ENCODE measurements at regions of chr20 and their contacts with region 1.

Region 1: DNA sequence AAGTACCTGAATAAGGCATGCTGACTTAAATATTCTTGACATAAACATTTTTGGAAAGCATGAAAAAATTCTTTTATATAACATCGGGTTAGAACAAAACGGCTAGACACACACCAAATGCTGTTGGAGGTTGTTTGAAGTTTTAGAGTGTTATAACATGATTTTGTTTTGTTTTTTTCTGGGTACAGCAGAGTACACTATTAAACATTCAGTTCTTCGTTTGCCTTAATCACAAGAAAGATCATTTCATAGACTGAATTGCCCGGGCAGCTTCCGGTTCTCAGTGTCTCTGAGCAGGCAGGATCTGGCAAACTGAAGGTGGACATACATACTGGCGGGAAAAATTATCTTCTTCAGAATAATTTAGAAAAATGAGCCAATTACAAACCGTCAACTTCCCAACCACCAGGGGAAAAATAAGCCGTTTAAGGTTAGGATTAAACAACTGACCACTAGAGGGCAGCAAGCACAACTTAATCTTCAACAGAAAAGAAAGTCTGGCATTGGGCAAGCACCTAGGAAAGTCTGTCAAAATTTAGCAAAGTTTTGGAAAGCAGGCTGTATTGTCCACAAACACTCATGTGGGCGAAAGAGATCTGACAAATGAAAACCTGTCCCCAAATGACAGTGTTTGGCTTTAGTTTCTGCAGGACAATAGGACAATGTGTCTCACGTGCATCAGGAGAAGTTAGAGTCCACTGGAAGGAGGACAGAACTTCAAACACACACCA is 15.0 kb downstream of the ZNF217 start:
- DNase-seq: peak in 1 of 3 donors; percentile 37
- ATAC-seq: peak; percentile 70 to 72
- H3K4me3 ChIP-seq: peak overlapping the region; percentile 8
- H3K27ac ChIP-seq: peak overlapping the region; percentile 82
- H3K4me1 ChIP-seq: peaks cover 7% of the 10 kb centered on the region
- H3K27me3 ChIP-seq: no peaks in the 10 kb centered on the region

Region 2: DNA sequence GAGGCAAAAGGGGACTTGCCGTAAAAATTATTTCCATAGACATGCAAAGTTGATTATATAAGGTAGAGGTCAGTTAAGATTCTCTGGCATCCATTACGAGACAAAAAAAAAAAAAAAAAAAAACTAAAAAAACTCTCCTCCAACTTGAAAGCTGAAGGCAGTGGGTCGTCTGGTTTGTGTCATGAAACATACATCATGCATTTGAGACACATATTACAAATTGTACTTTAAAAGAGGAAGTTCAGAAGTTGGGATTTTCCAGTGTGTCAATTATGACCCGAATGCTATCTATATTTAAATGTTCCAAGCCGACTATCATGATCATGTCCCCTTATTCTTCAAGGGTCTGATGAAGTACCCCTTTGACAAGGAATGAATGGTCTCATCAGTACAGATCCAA is 110.1 kb before region 1 on chr20:
- intact Hi-C with region 1: no loop called
- DNase-seq: no peak
- ATAC-seq: no peak
- H3K4me3 ChIP-seq: no peak overlapping the region
- H3K27ac ChIP-seq: no peak overlapping the region
- H3K4me1 ChIP-seq: no peaks in the 10 kb centered on the region
- H3K27me3 ChIP-seq: no peaks in the 10 kb centered on the region

Region 3: DNA sequence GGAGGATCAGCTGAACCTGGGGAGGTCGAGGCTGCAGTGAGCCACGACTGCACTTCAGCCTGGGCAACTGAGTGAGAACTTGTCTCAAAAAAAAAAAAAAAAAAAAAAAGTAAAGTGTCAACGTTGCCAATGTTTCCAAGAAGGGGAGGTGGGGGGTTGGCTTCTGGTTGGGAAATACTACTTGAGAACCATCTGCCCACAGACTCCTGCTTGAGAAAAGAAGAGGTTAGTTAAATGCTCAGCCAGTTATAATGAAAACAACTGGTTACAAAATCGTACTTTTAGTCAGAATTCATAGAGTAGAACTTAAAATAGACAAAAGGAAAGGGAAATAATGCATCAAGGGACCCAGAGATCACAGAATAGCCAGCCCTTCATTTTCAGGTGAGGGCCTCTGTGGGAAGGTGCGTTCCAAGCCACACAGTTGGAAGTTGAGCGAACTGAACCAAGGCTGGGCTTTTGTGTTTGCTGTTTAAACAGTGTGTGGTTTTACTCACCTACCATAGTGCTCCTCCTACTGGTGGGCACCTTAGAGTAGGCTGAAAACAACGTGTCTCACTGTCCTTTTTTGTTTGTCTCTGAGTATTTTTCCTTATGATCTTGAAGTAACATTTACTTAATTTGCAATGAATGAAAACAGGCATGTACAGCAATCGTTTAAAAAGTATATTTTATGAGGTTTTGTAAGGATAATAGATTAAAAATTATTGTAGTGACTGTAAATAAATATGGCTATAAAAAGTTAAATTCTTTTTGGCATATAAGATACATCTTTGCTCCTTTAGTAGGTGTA is 291.0 kb after region 1 on chr20:
- intact Hi-C with region 1: loop called in 1 of 4 experiments (anchors 5 kb)
- DNase-seq: peak in 2 of 3 donors; percentile 30 to 56
- ATAC-seq: peak; percentile 83 to 89
- H3K4me3 ChIP-seq: no peak overlapping the region
- H3K27ac ChIP-seq: no peak overlapping the region
- H3K4me1 ChIP-seq: peaks cover 2% of the 10 kb centered on the region
- H3K27me3 ChIP-seq: no peaks in the 10 kb centered on the region

Region 4: DNA sequence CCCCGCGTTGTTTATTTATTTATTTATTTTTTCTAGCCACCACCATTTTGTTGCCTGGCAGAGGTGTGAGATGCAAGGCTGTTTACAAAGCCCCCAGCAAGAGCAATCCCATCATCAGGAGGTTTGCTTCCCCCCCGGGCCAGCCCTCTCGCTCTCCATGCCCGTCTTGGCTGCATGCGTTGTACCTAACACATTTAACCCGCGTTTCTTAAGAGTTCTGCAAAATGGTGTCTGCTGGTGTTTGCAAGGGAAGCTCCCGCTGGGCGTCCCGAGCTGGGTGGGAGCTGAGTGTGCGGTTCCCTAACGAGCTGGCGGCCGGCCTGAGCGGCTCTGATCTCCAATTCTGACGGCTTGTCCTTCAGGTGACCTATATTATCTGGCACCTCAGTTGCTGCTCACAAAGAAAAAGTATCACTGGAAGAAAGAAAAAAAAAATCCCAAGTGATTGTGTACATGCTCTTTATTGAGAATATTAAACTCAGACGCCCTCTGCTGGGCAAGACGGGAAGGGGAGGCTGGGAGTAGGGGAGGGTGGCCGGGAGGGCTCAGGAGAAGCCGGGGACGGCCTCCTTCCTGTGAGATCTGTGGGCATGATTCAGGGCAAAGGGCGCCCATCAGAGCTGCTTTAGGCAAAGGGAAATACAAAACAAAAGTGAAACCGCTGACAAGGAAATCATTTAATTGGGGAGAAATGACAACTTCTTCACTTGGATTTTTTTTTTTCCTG is 337.0 kb after region 1 on chr20:
- intact Hi-C with region 1: loop called in 2 of 4 experiments (anchors 5 to 10 kb)
- DNase-seq: peak; percentile 93 to 99 (median 97)
- ATAC-seq: peak; percentile 92 to 93
- H3K4me3 ChIP-seq: peak overlapping the region; percentile 60
- H3K27ac ChIP-seq: peak overlapping the region; percentile 96
- H3K4me1 ChIP-seq: peaks cover 9% of the 10 kb centered on the region
- H3K27me3 ChIP-seq: no peaks in the 10 kb centered on the region

Region 5: GRCh38 chr20:53939572-53940359 is 361.1 kb after region 1 on chr20:
- intact Hi-C with region 1: loop called in 3 of 4 experiments (anchors 5 to 10 kb)
- DNase-seq: peak; percentile 93 to 97 (median 95)
- ATAC-seq: peak; percentile 89 to 90
- H3K4me3 ChIP-seq: no peak overlapping the region
- H3K27ac ChIP-seq: peak overlapping the region; percentile 56
- H3K4me1 ChIP-seq: peaks cover 5% of the 10 kb centered on the region
- H3K27me3 ChIP-seq: no peaks in the 10 kb centered on the region

Region 6: GRCh38 chr20:54062812-54063280 is 484.2 kb after region 1 on chr20:
- intact Hi-C with region 1: loop called in 1 of 4 experiments (anchors 10 kb)
- DNase-seq: no peak
- ATAC-seq: peak; percentile 44 to 80
- H3K4me3 ChIP-seq: no peak overlapping the region
- H3K27ac ChIP-seq: no peak overlapping the region
- H3K4me1 ChIP-seq: no peaks in the 10 kb centered on the region
- H3K27me3 ChIP-seq: no peaks in the 10 kb centered on the region

Region 7: DNA sequence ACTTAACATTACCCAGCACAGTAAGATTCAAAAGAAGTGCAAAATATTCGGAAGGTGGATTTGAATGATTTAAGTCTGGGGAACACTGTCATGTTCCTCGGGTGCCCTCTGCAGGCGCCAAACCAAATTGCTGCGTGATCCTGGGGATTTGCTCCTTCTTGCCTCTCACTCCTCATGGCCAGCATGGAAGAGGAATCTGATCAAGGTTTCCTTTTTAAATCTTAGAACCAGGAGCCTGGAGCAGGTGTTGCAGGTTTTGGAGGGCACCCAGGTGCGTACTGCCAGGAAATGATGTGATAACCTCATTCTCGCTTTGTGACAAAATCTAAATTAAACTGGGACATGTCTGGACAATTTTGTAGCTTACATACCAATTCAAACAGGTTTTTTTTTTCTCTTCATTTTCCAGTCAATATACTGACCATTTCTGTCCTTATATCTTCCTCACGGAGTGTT is 621.1 kb after region 1 on chr20:
- intact Hi-C with region 1: loop called in 2 of 4 experiments (anchors 5 to 10 kb)
- DNase-seq: peak; percentile 53 to 88 (median 87)
- ATAC-seq: peak; percentile 55 to 69
- H3K4me3 ChIP-seq: no peak overlapping the region
- H3K27ac ChIP-seq: no peak overlapping the region
- H3K4me1 ChIP-seq: no peaks in the 10 kb centered on the region
- H3K27me3 ChIP-seq: no peaks in the 10 kb centered on the region

Region 8: GRCh38 chr20:54207743-54208547 is 629.3 kb after region 1 on chr20 and contains the start of gene PFDN4:
- intact Hi-C with region 1: loop called in 1 of 4 experiments (anchors 10 kb)
- DNase-seq: peak; percentile 84 to 94 (median 94)
- ATAC-seq: peak; percentile 97 to 98
- H3K4me3 ChIP-seq: peak within 1 kb of the TSS; percentile 90
- H3K27ac ChIP-seq: peak within 1 kb of the TSS; percentile 99
- H3K4me1 ChIP-seq: peaks cover 4% of the 10 kb centered on the region
- H3K27me3 ChIP-seq: no peaks in the 10 kb centered on the region
- total RNA-seq, gene PFDN4: 19.6 to 28.4 (median 25.6) TPM

Region 9: DNA sequence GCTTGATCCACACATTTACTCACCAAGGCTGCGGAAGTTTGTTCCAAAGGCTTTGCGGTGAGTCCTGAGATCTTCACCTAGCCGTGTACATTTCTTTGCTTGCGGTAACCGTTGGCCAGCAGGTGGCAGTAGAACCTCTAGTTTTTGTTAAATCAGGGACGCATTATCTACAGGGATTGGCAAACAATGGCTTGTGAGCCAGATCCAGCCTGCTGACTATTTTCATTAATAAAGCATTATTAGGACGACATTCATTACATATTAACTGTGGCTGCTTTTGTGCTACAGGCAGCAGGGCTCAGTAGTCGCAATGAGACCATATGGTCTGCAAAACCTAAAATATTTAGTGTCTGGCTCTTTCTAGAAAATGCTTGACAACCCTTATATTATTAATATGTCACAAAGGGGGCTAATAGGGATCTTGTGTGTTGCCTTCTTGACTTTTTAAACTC is 1070.9 kb after region 1 on chr20:
- intact Hi-C with region 1: no loop called
- DNase-seq: peak; percentile 80 to 92 (median 86)
- ATAC-seq: peak; percentile 77 to 88
- H3K4me3 ChIP-seq: no peak overlapping the region
- H3K27ac ChIP-seq: no peak overlapping the region
- H3K4me1 ChIP-seq: no peaks in the 10 kb centered on the region
- H3K27me3 ChIP-seq: no peaks in the 10 kb centered on the region

Measured in right cardiac atrium (tissue), 5 donors.